Left ventricle myocardium superior (tissue), 1 donor: ENCODE measurements at regions of chr2 and their contacts with region 1.

Region 1: DNA sequence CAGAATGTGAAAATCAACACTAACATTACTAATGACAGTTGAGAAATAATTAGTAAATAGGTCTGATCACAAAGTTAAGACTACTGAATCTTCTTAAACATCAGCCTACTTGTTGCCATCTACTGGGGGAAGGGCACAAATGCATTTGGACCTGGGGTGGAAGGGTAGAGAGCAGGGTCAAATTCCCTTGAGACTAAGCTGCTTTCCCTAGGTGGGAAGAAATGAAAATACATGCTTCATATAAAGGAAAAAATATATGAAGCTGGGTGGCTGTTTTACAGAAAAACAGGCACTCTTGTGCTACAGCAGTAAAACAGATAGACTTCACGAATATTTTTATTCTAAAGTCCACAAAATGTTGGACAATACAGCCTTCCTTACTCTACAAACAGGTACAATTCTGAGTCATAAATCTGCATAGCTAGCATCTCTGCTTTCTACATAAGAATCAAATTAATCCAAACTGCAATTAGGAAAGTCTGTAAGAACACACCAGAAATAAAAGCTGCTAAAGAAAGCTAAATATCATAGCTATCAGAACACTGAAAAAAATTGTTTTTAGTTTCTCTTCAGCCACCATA is 10.9 kb downstream of the TRIP12 start:
- DNase-seq: no peak
- ATAC-seq: peak; percentile 40

Region 2: GRCh38 chr2:229800997-229801754 is 109.7 kb before region 1 on chr2:
- intact Hi-C with region 1: loop called (anchors 10 kb)
- DNase-seq: peak; percentile 38
- ATAC-seq: peak; percentile 74